A673 (cell line): ENCODE measurements at regions of chr1 and their contacts with region 1.

Region 1: DNA sequence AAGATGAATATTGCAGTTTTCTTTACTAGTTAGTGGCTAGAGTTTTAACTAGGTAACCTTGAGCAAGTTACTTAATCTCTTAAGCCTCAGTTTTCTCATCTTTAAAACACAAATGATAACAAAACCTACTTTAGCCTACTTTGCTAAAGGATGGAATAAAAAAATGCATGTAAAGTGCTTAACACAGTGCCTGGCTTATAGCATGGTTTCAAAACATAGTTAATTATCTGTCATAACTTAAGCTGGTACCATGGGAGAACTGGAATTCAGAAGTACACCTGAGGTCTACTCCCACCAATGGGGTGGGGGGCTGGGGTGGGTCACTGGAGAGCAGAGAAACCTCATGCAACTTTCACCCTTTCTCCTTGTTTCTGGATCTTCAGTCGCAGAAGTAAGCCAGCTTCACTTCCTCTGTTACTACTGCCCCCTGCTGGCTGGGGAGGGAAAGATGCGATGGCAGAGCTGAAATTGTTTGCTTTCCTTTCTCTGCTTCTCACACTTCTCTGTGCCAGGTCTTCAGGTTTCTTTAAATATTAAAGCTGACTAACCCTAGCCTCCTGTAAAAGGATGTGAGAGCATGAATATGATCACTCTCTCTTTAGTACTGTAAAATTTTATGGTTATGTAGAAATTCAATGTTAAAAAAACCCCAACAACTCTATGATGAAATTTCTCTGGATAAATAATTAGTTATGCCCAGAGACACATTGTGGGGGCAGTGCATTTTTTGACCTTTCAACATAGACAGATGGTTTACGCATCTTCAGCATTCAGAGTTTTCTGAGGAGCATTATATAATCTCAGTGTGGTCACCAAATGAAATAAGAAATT is 324.2 kb downstream of the HLX start:
- DNase-seq: peak; percentile 72
- H3K4me3 ChIP-seq: no peak overlapping the region
- H3K27ac ChIP-seq: no peak overlapping the region
- H3K4me1 ChIP-seq: no peaks in the 10 kb centered on the region
- H3K27me3 ChIP-seq: no peaks in the 10 kb centered on the region
- CTCF ChIP-seq: peak; percentile 84

Region 2: DNA sequence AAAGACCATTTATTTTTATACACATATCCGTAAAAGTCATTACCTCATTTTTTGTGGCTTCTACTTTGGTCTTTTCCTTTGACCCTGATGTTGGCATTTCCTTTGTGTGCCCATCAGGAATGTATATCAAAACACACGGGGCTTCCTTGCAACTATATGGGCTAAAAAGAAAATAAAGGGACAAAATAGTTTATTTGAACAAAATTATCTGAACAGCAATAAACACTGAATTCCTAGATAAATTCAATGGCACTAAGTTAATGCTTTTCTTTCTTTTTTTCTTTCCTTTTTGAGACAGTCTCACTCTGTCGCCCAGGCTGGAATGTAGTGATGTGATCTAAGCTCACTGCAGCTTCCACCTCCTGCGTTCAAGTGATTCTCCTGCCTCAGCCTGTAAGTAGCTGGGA is 1202.3 kb before region 1 on chr1:
- CTCF ChIA-PET with region 1: no interaction called
- POLR2A ChIA-PET with region 1: no interaction called
- intact Hi-C with region 1: no loop called
- DNase-seq: no peak
- H3K4me3 ChIP-seq: no peak overlapping the region
- H3K27ac ChIP-seq: no peak overlapping the region
- H3K4me1 ChIP-seq: no peaks in the 10 kb centered on the region
- H3K27me3 ChIP-seq: no peaks in the 10 kb centered on the region
- CTCF ChIP-seq: no peak

Region 3: GRCh38 chr1:220810179-220810653 is 393.2 kb before region 1 on chr1:
- CTCF ChIA-PET with region 1: no interaction called
- POLR2A ChIA-PET with region 1: no interaction called
- intact Hi-C with region 1: loop called (anchors 2 kb)
- DNase-seq: peak; percentile 87
- H3K4me3 ChIP-seq: peak overlapping the region; percentile 14
- H3K27ac ChIP-seq: no peak overlapping the region
- H3K4me1 ChIP-seq: peaks cover 7% of the 10 kb centered on the region
- H3K27me3 ChIP-seq: no peaks in the 10 kb centered on the region
- CTCF ChIP-seq: peak; percentile 92

Region 4: DNA sequence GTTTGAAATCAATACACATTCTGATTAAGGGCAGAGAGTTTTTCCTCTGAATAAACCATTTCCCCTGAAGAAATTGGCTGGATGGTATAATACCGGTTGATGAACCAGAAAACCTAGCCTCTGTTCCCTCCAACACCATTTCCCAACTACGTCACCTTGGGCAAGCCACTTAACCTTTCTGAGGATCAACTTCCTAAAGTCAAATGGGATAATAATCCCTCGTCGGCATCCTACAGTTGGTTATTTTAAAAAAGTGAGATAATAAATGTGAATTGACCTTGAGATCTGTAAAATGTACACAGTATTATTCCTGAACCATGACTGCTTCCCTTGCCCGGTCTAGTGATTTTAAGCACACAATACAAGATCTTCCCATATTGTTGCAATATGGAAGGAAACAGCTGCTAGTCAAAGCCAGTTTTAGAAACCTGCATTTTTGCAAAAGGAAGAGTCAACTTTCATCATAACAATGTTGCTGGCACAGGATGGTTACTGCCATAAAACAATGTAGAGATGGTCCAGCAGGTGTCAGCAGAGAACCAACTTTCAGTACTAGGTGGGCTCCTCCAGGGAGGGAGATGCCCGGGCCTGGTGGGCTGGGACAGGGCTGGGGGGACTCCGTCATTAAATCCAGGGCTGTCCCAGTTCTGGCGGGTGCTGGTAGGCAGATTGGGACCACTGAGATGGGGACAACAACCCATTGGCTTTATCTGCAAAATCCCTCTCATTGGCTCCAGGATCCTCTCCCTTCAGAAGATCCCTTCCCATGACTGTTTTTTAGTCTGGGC is 329.4 kb before region 1 on chr1:
- CTCF ChIA-PET with region 1: interaction called, 3 read pairs
- POLR2A ChIA-PET with region 1: no interaction called
- intact Hi-C with region 1: loop called (anchors 1 kb)
- DNase-seq: peak; percentile 52
- H3K4me3 ChIP-seq: no peak overlapping the region
- H3K27ac ChIP-seq: no peak overlapping the region
- H3K4me1 ChIP-seq: no peaks in the 10 kb centered on the region
- H3K27me3 ChIP-seq: peaks cover 41% of the 10 kb centered on the region
- CTCF ChIP-seq: peak; percentile 72

Region 5: DNA sequence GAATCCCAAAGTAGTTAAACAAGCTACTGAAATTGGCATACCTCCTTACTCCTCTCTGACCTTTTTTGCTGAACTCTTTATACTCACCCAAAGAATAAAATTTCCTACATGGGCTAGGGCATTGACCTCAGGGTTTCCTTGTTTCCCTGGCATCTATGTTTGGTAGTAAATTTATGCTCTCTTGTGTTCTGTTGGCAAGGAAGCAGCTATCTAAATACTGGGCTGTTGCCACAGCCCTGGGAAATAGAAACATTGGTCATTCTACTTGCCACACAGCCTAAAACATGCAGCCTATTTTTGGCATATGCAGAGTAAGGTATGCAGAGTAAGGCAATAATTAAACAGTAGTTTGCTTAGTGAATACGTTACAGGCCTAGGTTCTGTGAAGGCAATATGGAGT is 27.2 kb after region 1 on chr1:
- CTCF ChIA-PET with region 1: no interaction called
- POLR2A ChIA-PET with region 1: no interaction called
- intact Hi-C with region 1: no loop called
- DNase-seq: no peak
- H3K4me3 ChIP-seq: no peak overlapping the region
- H3K27ac ChIP-seq: no peak overlapping the region
- H3K4me1 ChIP-seq: no peaks in the 10 kb centered on the region
- H3K27me3 ChIP-seq: no peaks in the 10 kb centered on the region
- CTCF ChIP-seq: no peak